ENCODE measurements at regions of chr16 and their contacts with region 1.

Region 1: DNA sequence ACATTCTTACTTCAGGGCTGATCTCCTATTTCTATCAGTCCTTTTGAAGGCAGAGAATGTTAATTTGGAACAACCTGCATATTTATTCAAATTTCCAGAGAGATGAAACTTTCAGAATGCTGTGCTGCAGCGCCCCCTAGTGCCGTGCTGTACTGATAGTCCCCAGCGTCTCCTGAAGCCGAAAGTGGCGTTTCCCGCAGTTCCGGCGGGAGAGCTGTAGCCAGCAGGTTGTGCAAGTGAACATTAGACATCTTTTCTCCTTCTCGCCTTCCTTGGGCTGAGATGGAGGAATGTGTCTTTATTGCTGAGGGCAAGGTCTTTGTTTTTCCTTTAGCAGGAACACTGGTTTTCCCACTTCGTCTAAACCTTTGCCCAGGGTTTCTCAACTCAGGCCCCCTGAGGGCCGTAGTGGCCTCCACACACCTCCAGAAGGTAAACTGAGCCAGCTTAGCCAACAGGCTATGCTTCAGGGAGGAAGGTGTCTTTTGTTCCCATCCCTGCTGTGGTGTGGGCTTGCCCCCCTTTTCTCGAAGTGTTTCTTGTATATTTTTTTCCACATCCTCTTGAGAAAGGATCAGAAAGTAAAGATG is 26.4 kb downstream of the USP10 start:
- H3K4me3 ChIP-seq: no peak overlapping the region
- H3K27ac ChIP-seq: no peak overlapping the region
- H3K4me1 ChIP-seq: peaks cover 27% of the 10 kb centered on the region
- CTCF ChIP-seq: peak; percentile 94

Region 2: DNA sequence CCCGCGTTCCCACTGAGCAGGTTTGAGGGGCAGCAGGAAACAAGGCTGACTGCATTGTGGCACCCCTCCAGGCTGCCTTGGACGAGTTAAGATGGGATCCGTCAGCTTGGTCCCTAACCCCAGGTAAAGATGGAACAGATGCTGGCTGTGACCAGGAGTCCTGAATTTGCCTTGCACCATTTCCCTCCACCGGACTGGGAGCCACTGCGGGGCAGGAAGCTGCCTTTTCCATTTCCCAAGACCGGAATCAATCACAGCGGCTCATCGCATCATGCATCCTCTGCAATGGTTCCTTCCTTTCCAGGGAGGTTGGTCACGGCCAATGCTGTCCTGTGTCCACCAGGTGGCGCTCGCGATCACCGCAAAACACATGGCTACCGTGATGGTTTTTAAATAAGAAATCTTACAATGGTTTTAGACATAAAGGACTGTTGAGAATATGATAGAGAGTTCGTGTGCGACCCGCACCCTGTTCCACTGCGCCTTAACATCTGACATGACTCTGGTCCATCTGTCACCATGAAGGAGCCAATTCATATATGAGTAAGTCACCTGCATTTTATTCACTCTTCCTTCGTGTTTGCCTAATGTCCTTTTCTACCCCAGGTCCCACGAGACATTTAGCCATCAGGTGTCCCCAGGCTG is 214.9 kb before region 1 on chr16:
- CTCF ChIA-PET with region 1: interaction called, 14 read pairs
- POLR2A ChIA-PET with region 1: no interaction called
- H3K4me3 ChIP-seq: no peak overlapping the region
- H3K27ac ChIP-seq: no peak overlapping the region
- H3K4me1 ChIP-seq: no peaks in the 10 kb centered on the region; the same call in 1 of the 2 replicates
- CTCF ChIP-seq: peak; percentile 71

Region 3: GRCh38 chr16:84569382-84569987 is 156.7 kb before region 1 on chr16:
- CTCF ChIA-PET with region 1: no interaction called
- POLR2A ChIA-PET with region 1: no interaction called
- H3K4me3 ChIP-seq: no peak overlapping the region
- H3K27ac ChIP-seq: no peak overlapping the region
- H3K4me1 ChIP-seq: no peaks in the 10 kb centered on the region
- CTCF ChIP-seq: no peak

Region 4: DNA sequence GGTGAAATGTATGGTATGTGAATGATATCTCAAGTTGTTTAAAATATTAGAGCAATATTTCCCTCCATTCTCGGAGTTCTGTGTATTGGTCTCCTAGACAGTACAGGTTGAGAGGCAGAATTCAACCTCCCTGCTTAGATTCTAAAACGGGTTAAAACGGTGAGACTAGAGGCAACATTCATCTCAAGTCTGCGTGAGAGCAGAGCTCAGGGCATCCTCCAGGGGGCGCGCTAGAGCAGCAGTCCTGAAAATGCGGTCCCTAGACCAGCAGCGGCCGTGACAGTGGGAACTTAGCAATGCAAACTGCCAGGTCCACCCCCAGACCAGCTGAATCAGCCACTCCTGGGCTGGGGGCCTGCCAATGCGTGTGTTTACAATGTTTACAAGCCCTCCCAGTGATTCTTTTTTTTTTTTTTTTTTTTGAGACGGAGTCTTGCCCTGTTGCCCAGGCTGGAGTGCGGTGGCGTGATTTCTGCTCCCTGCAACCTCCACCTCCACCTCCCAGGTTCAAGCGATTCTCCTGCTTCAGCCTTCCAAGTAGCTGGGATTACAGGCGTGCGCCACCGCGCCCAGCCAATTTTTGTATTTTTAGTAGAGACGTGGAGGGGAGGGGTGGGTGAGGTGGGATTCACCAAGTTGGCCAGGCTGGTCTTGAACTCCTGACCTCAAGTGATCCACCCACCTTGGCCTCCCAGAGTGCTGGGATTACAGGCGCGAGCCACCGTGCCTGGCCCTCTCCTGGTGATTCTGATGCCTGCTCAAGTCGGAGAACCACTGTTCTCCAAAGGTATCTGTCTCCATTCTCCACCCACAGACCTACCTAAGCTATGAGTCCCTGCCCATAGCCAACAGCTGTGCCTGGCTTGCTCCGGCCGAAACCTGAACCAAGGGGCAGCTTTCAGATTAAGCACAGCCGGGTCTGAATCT is 53.6 kb before region 1 on chr16:
- CTCF ChIA-PET with region 1: interaction called, 75 read pairs
- POLR2A ChIA-PET with region 1: no interaction called
- H3K4me3 ChIP-seq: no peak overlapping the region
- H3K27ac ChIP-seq: no peak overlapping the region
- H3K4me1 ChIP-seq: no peaks in the 10 kb centered on the region
- CTCF ChIP-seq: peak; percentile 70

Region 5: GRCh38 chr16:84714028-84714427 is 12.1 kb before region 1 on chr16:
- CTCF ChIA-PET with region 1: interaction called, 47 read pairs
- POLR2A ChIA-PET with region 1: interaction called, 3 read pairs
- H3K4me3 ChIP-seq: no peak overlapping the region
- H3K27ac ChIP-seq: no peak overlapping the region
- H3K4me1 ChIP-seq: peaks cover 21% of the 10 kb centered on the region
- CTCF ChIP-seq: no peak

Region 6: GRCh38 chr16:84970447-84971127 is 244.4 kb after region 1 on chr16:
- CTCF ChIA-PET with region 1: interaction called, 13 read pairs
- POLR2A ChIA-PET with region 1: no interaction called
- H3K4me3 ChIP-seq: no peak overlapping the region
- H3K27ac ChIP-seq: no peak overlapping the region
- H3K4me1 ChIP-seq: no peaks in the 10 kb centered on the region
- CTCF ChIP-seq: peak; percentile 94